Panc1 (cell line): ENCODE measurements at regions of chr11 and their contacts with region 1.

Region 1: GRCh38 chr11:96242971-96243647 is 99.9 kb downstream of the MAML2 start:
- DNase-seq: peak; percentile 90
- ATAC-seq: peak; percentile 97
- H3K4me3 ChIP-seq: peak overlapping the region; percentile 55 to 62
- H3K27ac ChIP-seq: peak overlapping the region; percentile 86
- H3K4me1 ChIP-seq: peaks cover 29% of the 10 kb centered on the region
- H3K27me3 ChIP-seq: no peaks in the 10 kb centered on the region
- CTCF ChIP-seq: no peak

Region 2: GRCh38 chr11:96065379-96065778 is 177.7 kb before region 1 on chr11:
- CTCF ChIA-PET with region 1: no interaction called
- POLR2A ChIA-PET with region 1: no interaction called
- in situ Hi-C with region 1: no loop called
- intact Hi-C with region 1: no loop called
- DNase-seq: no peak
- ATAC-seq: no peak
- H3K4me3 ChIP-seq: no peak overlapping the region
- H3K27ac ChIP-seq: no peak overlapping the region
- H3K4me1 ChIP-seq: no peaks in the 10 kb centered on the region
- H3K27me3 ChIP-seq: no peaks in the 10 kb centered on the region
- CTCF ChIP-seq: no peak

Region 3: GRCh38 chr11:96134602-96135001 is 108.5 kb before region 1 on chr11:
- CTCF ChIA-PET with region 1: interaction called, 10 read pairs
- POLR2A ChIA-PET with region 1: no interaction called
- in situ Hi-C with region 1: no loop called
- intact Hi-C with region 1: no loop called
- DNase-seq: no peak
- ATAC-seq: no peak
- H3K4me3 ChIP-seq: no peak overlapping the region
- H3K27ac ChIP-seq: no peak overlapping the region
- H3K4me1 ChIP-seq: no peaks in the 10 kb centered on the region
- H3K27me3 ChIP-seq: no peaks in the 10 kb centered on the region
- CTCF ChIP-seq: no peak

Region 4: GRCh38 chr11:96267496-96268032 is 24.5 kb after region 1 on chr11:
- CTCF ChIA-PET with region 1: no interaction called
- POLR2A ChIA-PET with region 1: no interaction called
- in situ Hi-C with region 1: no loop called
- intact Hi-C with region 1: no loop called
- DNase-seq: no peak
- ATAC-seq: peak; percentile 39; the same call in 1 of the 2 replicates
- H3K4me3 ChIP-seq: no peak overlapping the region
- H3K27ac ChIP-seq: peak overlapping the region; percentile 26; the same call in 1 of the 2 replicates
- H3K4me1 ChIP-seq: no peaks in the 10 kb centered on the region
- H3K27me3 ChIP-seq: no peaks in the 10 kb centered on the region
- CTCF ChIP-seq: no peak

Region 5: DNA sequence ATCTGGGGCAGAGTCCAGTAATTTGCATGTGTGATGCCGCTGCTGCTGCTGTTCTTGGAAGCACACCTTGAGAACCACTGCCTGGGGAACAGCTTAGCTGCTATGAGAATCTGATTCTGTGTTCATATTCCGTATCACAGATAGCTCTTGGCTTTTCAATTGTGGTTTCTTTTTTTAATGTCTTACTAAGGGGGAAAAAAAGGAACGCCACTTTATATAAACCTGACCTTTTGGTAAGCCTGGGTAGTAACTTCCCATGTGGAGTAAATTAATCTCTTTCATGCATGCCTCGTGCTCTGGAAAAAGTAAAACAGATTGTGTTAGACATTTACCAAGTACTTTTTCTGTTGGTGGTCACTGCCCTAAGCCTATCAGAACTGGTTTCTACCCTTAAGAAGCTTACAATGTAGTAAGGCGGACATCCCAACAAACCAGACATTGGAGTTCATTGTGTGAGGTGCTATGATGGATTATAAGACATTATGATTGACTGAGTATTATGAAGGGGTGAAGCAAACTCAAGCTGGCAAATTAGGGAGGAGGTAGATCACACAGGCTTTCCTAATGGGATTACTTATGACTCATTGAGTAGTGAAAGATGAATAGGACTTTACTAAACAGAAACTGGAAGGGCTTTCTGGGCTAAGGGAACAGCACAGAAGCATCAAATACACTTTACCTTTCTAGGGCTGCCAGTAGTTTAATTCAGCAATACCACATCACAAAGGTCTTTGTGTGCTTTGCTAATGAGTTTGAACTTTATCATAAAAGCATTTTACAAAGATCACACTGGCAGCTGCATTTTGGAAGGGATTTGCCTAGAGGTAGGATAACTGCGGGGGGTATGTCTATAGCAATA is 35.2 kb after region 1 on chr11:
- CTCF ChIA-PET with region 1: no interaction called
- POLR2A ChIA-PET with region 1: interaction called, 10 read pairs
- in situ Hi-C with region 1: no loop called
- intact Hi-C with region 1: no loop called
- DNase-seq: no peak
- ATAC-seq: peak; percentile 26; the same call in 1 of the 2 replicates
- H3K4me3 ChIP-seq: no peak overlapping the region
- H3K27ac ChIP-seq: no peak overlapping the region
- H3K4me1 ChIP-seq: peaks cover 7% of the 10 kb centered on the region; the same call in 1 of the 2 replicates
- H3K27me3 ChIP-seq: no peaks in the 10 kb centered on the region
- CTCF ChIP-seq: no peak